ENCODE measurements at regions of chr12 and their contacts with region 1.

Region 1: GRCh38 chr12:125183187-125184067 is 118.2 kb downstream of the AACS start:
- DNase-seq: peak; percentile 75 to 89 (median 87)
- ATAC-seq: peak; percentile 61 to 77
- H3K4me3 ChIP-seq: no peak overlapping the region
- H3K27ac ChIP-seq: no peak overlapping the region
- H3K4me1 ChIP-seq: no peaks in the 10 kb centered on the region
- H3K27me3 ChIP-seq: no peaks in the 10 kb centered on the region

Region 2: DNA sequence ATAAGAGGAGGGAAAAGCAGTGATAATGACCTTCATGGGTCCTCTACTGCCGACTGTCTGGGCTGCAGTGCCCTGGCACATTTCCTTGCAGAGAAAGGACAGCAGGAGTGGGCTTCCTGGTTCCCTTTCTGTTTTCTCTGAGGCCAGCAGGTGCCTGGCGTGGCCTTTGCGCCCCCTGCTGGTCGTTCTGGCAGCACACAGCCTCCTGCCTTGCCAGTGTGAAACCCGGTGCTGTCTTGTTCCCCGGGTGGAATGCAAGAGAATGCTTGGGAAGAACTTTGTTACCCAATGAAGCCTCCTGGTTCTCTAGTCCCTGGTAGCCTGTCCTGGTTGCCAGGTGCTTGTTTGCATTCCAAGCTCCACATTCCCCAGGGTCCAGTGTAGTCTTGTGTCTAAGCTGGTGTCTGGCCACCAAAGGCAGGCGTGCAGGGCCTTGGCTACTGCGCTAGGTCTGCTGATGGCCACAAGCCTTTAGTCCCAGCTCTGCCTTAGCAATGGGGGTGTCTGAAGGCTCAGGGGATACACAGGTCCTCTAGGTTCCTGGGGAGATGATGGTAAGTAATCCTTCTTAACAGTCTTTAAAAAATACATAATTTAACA is 1691.1 kb after region 1 on chr12:
- intact Hi-C with region 1: loop called in 2 of 4 experiments (anchors 10 kb)
- DNase-seq: peak; percentile 53 to 83 (median 74)
- ATAC-seq: peak; percentile 72 to 81
- H3K4me3 ChIP-seq: no peak overlapping the region
- H3K27ac ChIP-seq: no peak overlapping the region
- H3K4me1 ChIP-seq: no peaks in the 10 kb centered on the region
- H3K27me3 ChIP-seq: no peaks in the 10 kb centered on the region

Measured in right cardiac atrium (tissue), 5 donors.